Tibial artery (tissue), 4 donors: ENCODE measurements at regions of chr5 and their contacts with region 1.

Region 1: DNA sequence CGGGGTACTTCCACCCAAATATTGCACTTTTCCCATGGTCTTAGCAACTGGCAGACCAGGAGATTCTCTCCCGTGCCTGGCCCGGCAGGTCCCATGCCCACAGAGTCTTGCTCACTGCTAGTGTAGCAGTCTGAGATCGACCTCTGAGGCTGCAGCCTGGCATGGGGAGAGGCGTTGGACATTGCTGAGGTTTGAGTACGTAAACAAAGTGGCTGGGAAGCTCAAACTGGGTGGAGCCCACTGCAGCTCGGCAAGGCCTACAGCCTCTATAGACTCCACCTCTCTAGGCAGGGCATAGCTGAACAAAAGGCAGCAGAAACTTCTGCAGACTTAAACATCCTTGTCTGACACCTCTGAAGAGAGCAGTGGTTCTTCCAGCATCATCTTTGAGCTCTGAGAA is 40.1 kb upstream of the EBF1 start:
- DNase-seq: no peak
- H3K4me3 ChIP-seq: no peak overlapping the region
- H3K27ac ChIP-seq: no peak overlapping the region
- H3K4me1 ChIP-seq: peaks cover 0 to 6% (median 0%) of the 10 kb centered on the region in 4 donors
- H3K27me3 ChIP-seq: peaks cover 0 to 10% of the 10 kb centered on the region in 2 donors
- CTCF ChIP-seq: no peak

Region 2: GRCh38 chr5:159100025-159100781 is 39.6 kb before region 1 on chr5:
- intact Hi-C with region 1: no loop called
- DNase-seq: peak; percentile 94 to 97
- H3K4me3 ChIP-seq: peak overlapping the region; percentile 80 to 82
- H3K27ac ChIP-seq: peak overlapping the region; percentile 87 to 97
- H3K4me1 ChIP-seq: peaks cover 0 to 48% (median 25%) of the 10 kb centered on the region in 4 donors
- H3K27me3 ChIP-seq: no peaks in the 10 kb centered on the region
- CTCF ChIP-seq: no peak

Region 3: DNA sequence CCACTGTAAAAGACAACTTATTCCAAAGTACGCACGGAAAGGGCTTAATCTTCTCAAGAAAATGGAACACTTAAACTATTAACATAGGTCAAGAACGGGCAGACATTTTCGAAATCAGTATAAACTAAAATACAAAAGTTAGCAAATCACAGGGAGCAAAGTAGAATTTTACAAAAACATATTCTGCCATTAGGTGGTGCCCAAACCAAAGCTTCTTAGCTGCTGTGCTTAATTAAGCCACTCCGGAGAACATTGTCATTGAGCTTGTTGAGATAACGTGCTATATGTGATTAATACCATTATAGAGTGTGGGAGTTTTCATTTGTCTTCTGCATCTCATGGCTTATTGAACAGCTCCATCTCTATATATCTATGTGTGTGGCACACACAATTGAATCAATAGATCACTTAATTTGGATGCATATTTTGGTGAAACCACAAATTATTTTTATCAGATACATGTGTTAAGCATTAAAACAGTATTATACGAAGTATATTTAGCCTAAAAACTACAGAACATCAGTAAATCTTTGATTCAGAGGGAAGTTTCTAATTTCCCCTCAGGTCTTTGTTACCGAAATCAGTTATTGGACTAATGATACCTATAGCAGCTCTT is 146.7 kb after region 1 on chr5:
- intact Hi-C with region 1: no loop called
- DNase-seq: no peak
- H3K4me3 ChIP-seq: no peak overlapping the region
- H3K27ac ChIP-seq: no peak overlapping the region
- H3K4me1 ChIP-seq: no peaks in the 10 kb centered on the region
- H3K27me3 ChIP-seq: no peaks in the 10 kb centered on the region
- CTCF ChIP-seq: peak; percentile 19 to 21

Region 4: GRCh38 chr5:159324102-159324760 is 184.4 kb after region 1 on chr5:
- intact Hi-C with region 1: loop called (anchors 5 kb)
- DNase-seq: no peak
- H3K4me3 ChIP-seq: no peak overlapping the region
- H3K27ac ChIP-seq: no peak overlapping the region
- H3K4me1 ChIP-seq: no peaks in the 10 kb centered on the region
- H3K27me3 ChIP-seq: peaks cover 0 to 28% of the 10 kb centered on the region in 2 donors
- CTCF ChIP-seq: no peak